ENCODE measurements at regions of chr2 and their contacts with region 1.

Region 1: GRCh38 chr2:185291035-185291647 is 447.5 kb upstream of the FSIP2 start:
- DNase-seq: peak; percentile 43
- ATAC-seq: peak; percentile 51
- H3K4me3 Mint-ChIP-seq: no peak overlapping the region
- H3K27ac Mint-ChIP-seq: no peak overlapping the region
- H3K4me1 Mint-ChIP-seq: no peaks in the 10 kb centered on the region
- H3K27me3 Mint-ChIP-seq: no peaks in the 10 kb centered on the region
- CTCF ChIP-seq: peak; percentile 51

Region 2: DNA sequence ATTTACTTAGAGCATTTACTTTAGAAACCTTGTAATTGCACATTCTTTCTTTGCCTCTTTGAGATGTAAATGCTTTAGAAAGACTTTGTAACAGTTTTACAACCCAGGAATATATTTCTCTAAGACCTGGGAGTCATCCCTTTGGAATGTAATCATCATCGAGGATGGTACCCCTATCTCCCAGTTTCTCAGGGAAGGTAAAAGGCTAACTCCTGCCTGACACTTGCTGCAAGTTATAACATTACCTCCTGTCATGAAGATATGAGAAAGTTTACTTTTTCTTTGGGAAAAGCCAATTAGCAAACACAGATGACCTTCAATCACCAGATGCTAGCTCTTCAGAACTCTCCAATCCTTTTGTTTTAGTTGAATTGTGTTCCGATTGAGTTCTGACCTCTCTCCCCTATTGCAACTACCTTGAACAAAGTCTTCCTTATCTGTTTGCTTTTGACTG is 27.2 kb after region 1 on chr2:
- CTCF ChIA-PET with region 1: no interaction called
- POLR2A ChIA-PET with region 1: no interaction called
- intact Hi-C with region 1: no loop called
- DNase-seq: no peak
- ATAC-seq: no peak
- H3K4me3 Mint-ChIP-seq: no peak overlapping the region
- H3K27ac Mint-ChIP-seq: no peak overlapping the region
- H3K4me1 Mint-ChIP-seq: no peaks in the 10 kb centered on the region
- H3K27me3 Mint-ChIP-seq: no peaks in the 10 kb centered on the region
- CTCF ChIP-seq: no peak

Region 3: GRCh38 chr2:185738679-185739472 is 447.7 kb after region 1 on chr2 and contains the start of gene FSIP2:
- CTCF ChIA-PET with region 1: interaction called, 8 read pairs
- POLR2A ChIA-PET with region 1: no interaction called
- intact Hi-C with region 1: loop called (anchors 10 kb)
- DNase-seq: peak; percentile 66
- ATAC-seq: peak; percentile 96
- H3K4me3 Mint-ChIP-seq: no peak within 1 kb of the TSS
- H3K27ac Mint-ChIP-seq: no peak within 1 kb of the TSS
- H3K4me1 Mint-ChIP-seq: no peaks in the 10 kb centered on the region
- H3K27me3 Mint-ChIP-seq: peaks cover 12% of the 10 kb centered on the region
- CTCF ChIP-seq: peak; percentile 82
- total RNA-seq, gene FSIP2: 0.14 TPM in 1 of 2 experiments, not detected in the other